ENCODE measurements at regions of chr17 and their contacts with region 1.

Region 1: GRCh38 chr17:50200457-50201275 is 765 bp downstream of the COL1A1 start:
- DNase-seq: peak; percentile 96 to 98
- H3K4me3 ChIP-seq: peak overlapping the region; percentile 42
- H3K4me3 Mint-ChIP-seq: peak overlapping the region; percentile 73
- H3K27ac Mint-ChIP-seq: peak overlapping the region; percentile 7
- H3K4me1 ChIP-seq: peaks cover 23% of the 10 kb centered on the region
- H3K4me1 Mint-ChIP-seq: peaks cover 20% of the 10 kb centered on the region
- H3K27me3 ChIP-seq: 0 out of 2 replicates have a peak, but pooled peaks cover 1% of the 10 kb centered on the region
- H3K27me3 Mint-ChIP-seq: no peaks in the 10 kb centered on the region
- CTCF ChIP-seq: peak; percentile 99 to 100

Region 2: GRCh38 chr17:49861150-49861892 is 339.3 kb before region 1 on chr17:
- CTCF ChIA-PET with region 1: interaction called, 20 read pairs
- POLR2A ChIA-PET with region 1: interaction called, 14 read pairs
- intact Hi-C with region 1: loop called (anchors 1 kb)
- DNase-seq: peak; percentile 91 to 95
- H3K4me3 ChIP-seq: no peak overlapping the region
- H3K4me3 Mint-ChIP-seq: no peak overlapping the region
- H3K27ac Mint-ChIP-seq: no peak overlapping the region
- H3K4me1 ChIP-seq: peaks cover 26% of the 10 kb centered on the region
- H3K4me1 Mint-ChIP-seq: peaks cover 20% of the 10 kb centered on the region
- H3K27me3 ChIP-seq: no peaks in the 10 kb centered on the region
- H3K27me3 Mint-ChIP-seq: no peaks in the 10 kb centered on the region
- CTCF ChIP-seq: peak; percentile 99 to 100

Region 3: GRCh38 chr17:49906477-49907136 is 294.1 kb before region 1 on chr17:
- CTCF ChIA-PET with region 1: no interaction called
- POLR2A ChIA-PET with region 1: no interaction called
- intact Hi-C with region 1: no loop called
- DNase-seq: no peak
- H3K4me3 ChIP-seq: no peak overlapping the region
- H3K4me3 Mint-ChIP-seq: no peak overlapping the region
- H3K27ac Mint-ChIP-seq: no peak overlapping the region
- H3K4me1 ChIP-seq: peaks cover 21% of the 10 kb centered on the region
- H3K4me1 Mint-ChIP-seq: peaks cover 20% of the 10 kb centered on the region
- H3K27me3 ChIP-seq: no peaks in the 10 kb centered on the region
- H3K27me3 Mint-ChIP-seq: no peaks in the 10 kb centered on the region
- CTCF ChIP-seq: no peak

Region 4: GRCh38 chr17:50177983-50178834 is 22.5 kb before region 1 on chr17:
- CTCF ChIA-PET with region 1: interaction called, 24 read pairs
- POLR2A ChIA-PET with region 1: no interaction called
- intact Hi-C with region 1: no loop called
- DNase-seq: peak; percentile 85
- H3K4me3 ChIP-seq: no peak overlapping the region
- H3K4me3 Mint-ChIP-seq: peak overlapping the region; percentile 36
- H3K27ac Mint-ChIP-seq: peak overlapping the region; percentile 10
- H3K4me1 ChIP-seq: peaks cover 31% of the 10 kb centered on the region
- H3K4me1 Mint-ChIP-seq: peaks cover 20% of the 10 kb centered on the region
- H3K27me3 ChIP-seq: no peaks in the 10 kb centered on the region
- H3K27me3 Mint-ChIP-seq: no peaks in the 10 kb centered on the region
- CTCF ChIP-seq: peak; percentile 90 to 91

Region 5: DNA sequence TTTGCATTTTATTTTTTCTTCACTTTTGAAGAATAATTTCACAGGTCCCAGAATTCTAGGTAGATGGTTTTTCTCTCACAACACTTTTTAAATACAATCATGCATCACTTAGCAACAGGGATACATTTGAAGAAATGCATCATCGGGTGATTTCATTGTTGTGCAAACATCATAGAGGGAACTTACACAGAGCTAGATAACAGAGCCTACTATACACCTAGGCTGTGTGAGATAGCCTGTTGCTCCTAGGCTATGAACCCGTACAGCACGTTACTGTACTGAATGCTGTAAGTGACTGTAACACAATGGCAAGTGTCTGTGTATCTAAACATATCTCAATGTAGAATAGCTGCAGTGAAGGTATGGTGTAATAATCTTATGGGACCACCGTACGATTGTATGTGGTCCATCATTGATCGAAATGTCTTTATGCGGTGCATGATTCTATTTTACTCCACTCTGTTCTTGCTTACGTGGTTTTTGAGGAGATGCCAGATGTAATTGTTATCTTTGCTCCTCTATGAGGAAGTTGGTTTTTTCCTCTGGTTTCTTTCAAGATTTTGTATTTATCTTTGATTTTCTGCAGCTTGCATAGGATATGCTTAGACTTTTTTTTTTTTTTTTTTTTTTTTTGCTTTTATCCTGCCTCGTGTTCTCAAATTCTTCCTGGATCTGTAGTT is 38.1 kb after region 1 on chr17:
- CTCF ChIA-PET with region 1: interaction called, 11 read pairs
- POLR2A ChIA-PET with region 1: no interaction called
- intact Hi-C with region 1: no loop called
- DNase-seq: peak in 1 of 2 experiments; percentile 60
- H3K4me3 ChIP-seq: no peak overlapping the region
- H3K4me3 Mint-ChIP-seq: no peak overlapping the region
- H3K27ac Mint-ChIP-seq: no peak overlapping the region
- H3K4me1 ChIP-seq: peaks cover 7% of the 10 kb centered on the region; the same call in 1 of the 2 replicates
- H3K4me1 Mint-ChIP-seq: peaks cover 12% of the 10 kb centered on the region
- H3K27me3 ChIP-seq: no peaks in the 10 kb centered on the region
- H3K27me3 Mint-ChIP-seq: no peaks in the 10 kb centered on the region
- CTCF ChIP-seq: no peak

Region 6: DNA sequence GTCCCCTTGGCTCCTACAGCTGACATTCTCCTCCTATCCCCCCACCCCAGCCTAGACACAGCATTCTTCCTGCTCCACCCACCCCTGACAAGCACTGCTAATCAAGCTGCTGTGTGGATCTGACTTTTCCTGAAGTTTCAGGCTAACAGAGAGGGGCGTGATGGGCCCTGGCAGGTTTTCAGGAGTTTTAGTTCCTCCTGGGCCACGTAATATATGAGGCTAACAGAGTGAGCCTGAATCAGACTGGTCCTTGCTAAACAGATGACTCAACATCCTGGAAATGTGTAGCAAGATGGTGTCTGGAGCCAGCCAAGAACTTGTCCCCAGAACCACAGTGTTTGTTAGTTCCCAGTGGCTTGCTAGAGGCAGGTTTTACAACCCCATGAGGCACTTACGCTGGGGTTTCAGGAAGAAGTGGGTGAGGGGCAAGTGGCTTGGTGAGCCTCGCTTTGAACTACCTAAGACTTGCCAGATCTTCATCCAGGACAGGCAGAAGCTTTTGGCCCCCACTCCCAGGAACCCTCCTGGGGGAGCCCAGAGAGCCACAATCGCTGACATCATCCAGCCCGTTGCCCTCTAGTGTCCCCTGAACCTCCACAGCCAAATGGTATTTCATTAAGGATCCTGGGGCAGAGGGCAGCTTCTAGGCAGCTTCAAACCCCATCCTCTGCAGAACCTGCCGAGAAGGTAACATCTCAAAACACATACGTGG is 89.5 kb after region 1 on chr17:
- CTCF ChIA-PET with region 1: interaction called, 135 read pairs
- POLR2A ChIA-PET with region 1: interaction called, 3 read pairs
- intact Hi-C with region 1: no loop called
- DNase-seq: peak in 1 of 2 experiments; percentile 43
- H3K4me3 ChIP-seq: no peak overlapping the region
- H3K4me3 Mint-ChIP-seq: no peak overlapping the region
- H3K27ac Mint-ChIP-seq: no peak overlapping the region
- H3K4me1 ChIP-seq: peaks cover 11% of the 10 kb centered on the region
- H3K4me1 Mint-ChIP-seq: peaks cover 8% of the 10 kb centered on the region
- H3K27me3 ChIP-seq: no peaks in the 10 kb centered on the region
- H3K27me3 Mint-ChIP-seq: no peaks in the 10 kb centered on the region
- CTCF ChIP-seq: no peak

Region 7: DNA sequence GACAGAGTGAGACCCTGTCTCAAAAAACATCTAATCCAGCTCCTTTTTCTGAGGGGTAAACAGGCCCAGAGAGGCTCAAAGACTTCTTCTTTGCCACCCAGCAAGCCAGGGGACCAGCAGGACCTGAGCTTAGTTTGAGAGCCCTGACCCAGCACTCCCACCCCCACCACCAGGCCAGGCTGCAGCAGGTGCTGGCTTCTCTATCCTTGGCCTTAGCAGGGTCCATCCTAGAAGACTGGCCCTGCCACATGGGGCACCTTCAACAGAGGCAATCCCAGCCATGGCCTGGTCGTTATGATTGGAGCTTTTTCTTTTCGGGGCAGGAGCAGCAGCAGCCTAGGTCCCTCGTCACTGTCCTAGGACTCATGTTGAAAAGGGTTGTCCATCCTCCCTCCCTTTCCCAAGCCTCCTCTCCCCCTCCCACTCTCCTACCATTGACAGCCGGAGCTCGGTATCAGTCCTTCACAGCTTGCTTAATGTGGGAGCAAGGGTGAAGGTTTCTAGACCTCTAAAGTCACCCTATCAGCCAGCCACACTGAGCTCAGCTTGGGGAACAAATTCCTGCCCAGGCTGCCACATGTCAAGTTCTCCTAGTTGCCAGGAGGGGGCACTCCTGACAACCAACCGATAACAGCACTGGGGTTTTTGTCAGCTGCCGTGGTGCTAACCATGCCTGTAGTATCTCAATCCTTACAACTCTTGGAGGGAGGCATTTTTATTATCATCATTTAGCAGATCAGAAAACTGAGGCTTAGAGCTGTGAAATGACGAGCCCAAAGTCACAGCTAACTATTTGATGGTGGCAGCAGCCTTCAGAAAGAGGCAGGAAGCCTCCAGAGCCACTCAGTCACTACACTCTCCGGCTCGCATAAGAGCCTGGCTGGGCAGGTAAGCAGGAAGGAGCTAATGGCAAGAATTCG is 161.2 kb after region 1 on chr17:
- CTCF ChIA-PET with region 1: interaction called, 15 read pairs
- POLR2A ChIA-PET with region 1: interaction called, 8 read pairs
- intact Hi-C with region 1: no loop called
- DNase-seq: peak; percentile 80 to 81
- H3K4me3 ChIP-seq: no peak overlapping the region
- H3K4me3 Mint-ChIP-seq: no peak overlapping the region
- H3K27ac Mint-ChIP-seq: peak overlapping the region; percentile 23
- H3K4me1 ChIP-seq: no peaks in the 10 kb centered on the region; the same call in 1 of the 2 replicates
- H3K4me1 Mint-ChIP-seq: peaks cover 10% of the 10 kb centered on the region
- H3K27me3 ChIP-seq: no peaks in the 10 kb centered on the region
- H3K27me3 Mint-ChIP-seq: no peaks in the 10 kb centered on the region
- CTCF ChIP-seq: peak; percentile 97 to 98

Region 8: GRCh38 chr17:50550661-50551432 is 350.2 kb after region 1 on chr17:
- CTCF ChIA-PET with region 1: no interaction called
- POLR2A ChIA-PET with region 1: no interaction called
- intact Hi-C with region 1: no loop called
- DNase-seq: peak; percentile 94 to 97
- H3K4me3 ChIP-seq: no peak overlapping the region
- H3K4me3 Mint-ChIP-seq: no peak overlapping the region
- H3K27ac Mint-ChIP-seq: no peak overlapping the region
- H3K4me1 ChIP-seq: peaks cover 15% of the 10 kb centered on the region
- H3K4me1 Mint-ChIP-seq: peaks cover 11% of the 10 kb centered on the region
- H3K27me3 ChIP-seq: no peaks in the 10 kb centered on the region
- H3K27me3 Mint-ChIP-seq: no peaks in the 10 kb centered on the region
- CTCF ChIP-seq: peak; percentile 99

Measured in Caco-2 (cell line).